PC-9 (cell line): ENCODE measurements at regions of chr6 and their contacts with region 1.

Region 1: DNA sequence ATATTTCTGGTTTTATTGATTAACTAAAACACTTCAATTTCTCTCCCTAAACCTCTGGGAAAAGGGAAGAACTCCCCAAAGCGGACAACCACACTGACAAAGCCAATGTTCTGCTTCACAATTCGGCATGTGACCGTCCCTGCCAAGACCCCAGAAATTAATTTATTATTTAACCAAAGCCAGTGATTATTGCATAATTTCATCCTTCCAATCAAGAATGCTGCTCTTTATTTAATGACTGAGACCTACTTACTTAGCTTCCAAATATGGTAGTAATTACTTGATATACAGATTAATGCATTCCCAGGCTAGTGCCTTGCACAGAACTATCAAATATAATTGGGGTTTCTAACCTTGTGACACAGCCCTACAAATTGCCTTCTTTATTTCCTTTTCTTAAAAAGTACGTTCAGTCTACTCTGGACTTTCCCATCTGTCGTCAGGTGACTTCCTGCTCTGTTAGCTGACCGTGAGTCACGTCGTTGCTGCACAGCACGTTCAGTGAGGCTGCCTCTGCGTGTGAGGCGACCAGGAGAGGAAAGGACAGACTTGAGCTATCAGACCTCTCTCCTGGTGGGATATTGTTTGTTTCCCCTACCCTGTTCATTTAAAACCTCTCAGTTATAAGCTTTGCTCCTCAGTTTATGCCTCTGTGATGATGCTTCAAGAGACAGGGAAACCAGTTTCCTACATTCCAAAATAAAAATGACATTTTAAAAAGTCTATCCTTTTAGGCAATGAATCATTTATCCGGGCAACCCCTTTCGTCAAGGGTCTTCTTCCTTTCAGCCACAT is 55.7 kb upstream of the TNFAIP3 start:
- DNase-seq: peak; percentile 56 to 93
- H3K4me3 ChIP-seq: peak overlapping the region; percentile 15; the same call in 1 of the 2 replicates
- H3K27ac ChIP-seq: peak overlapping the region; percentile 69
- H3K4me1 ChIP-seq: peaks cover 49% of the 10 kb centered on the region
- H3K27me3 ChIP-seq: no peaks in the 10 kb centered on the region
- CTCF ChIP-seq: no peak

Region 2: DNA sequence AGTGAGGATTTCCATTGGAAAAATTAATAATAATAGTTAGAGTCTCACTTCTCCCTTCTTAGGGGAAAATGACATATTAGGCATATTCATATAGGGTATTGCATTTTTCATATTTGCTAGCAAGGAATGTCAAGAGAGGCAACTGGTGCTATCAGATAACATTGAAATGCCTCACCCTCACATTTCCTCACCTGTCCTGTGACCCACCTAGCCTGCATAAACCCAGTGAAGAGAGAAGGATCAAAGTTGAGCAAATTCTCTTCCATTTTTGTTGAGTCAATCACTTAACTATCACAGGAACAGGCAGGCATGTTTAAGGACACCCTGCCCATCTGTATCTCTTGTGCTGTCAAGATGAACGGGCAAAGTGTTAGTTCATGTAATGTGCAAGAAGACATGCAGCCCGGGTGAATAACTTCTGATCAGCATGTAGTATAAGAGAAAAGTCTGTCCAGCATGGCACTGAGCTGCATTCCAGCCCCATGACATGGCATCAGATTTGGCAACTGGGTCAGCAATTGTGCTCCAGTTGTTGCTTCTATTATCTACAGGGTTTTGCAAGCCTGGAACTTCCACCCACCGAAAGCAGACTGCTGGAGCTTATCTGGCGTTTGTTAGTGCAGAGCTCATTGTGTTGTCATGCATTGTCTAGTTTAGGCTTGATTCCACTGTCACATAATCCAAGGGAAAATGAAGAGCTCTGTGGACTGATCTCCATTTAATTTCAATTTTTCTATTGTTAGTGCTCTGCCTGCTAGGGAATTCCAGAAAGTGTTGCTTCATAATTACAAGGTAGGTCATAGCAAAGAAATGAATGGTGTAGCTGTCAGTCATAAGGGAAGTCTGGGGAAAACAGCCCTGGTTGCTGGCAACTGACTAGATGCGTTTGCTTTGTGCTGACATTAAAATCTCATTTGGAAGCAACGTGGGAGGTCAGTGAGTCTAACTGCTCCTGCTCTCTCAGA is 82.7 kb before region 1 on chr6:
- CTCF ChIA-PET with region 1: no interaction called
- POLR2A ChIA-PET with region 1: no interaction called
- intact Hi-C with region 1: loop called (anchors 5 kb)
- DNase-seq: peak; percentile 74 to 93
- H3K4me3 ChIP-seq: peak overlapping the region; percentile 4; the same call in 1 of the 2 replicates
- H3K27ac ChIP-seq: peak overlapping the region; percentile 63
- H3K4me1 ChIP-seq: peaks cover 72% of the 10 kb centered on the region
- H3K27me3 ChIP-seq: no peaks in the 10 kb centered on the region
- CTCF ChIP-seq: no peak

Region 3: DNA sequence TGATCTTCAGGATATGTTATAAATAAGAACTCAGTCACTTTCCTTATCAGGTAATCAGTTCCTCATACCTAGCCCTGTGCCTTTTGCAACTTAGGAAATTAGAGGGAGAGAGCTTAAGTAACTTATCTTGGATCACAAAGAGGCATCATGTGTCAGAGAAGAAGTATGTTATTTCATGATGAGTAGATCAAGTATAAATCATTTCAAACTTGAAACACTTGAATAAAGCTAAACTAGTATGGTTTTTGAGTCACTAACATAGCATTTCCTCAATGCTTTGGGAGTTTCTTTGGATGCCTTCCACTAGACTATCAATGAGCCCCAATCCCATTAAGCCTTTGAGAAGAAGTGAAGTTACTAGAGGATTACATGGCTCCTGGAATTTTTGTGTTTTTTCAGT is 46.9 kb before region 1 on chr6:
- CTCF ChIA-PET with region 1: no interaction called
- POLR2A ChIA-PET with region 1: no interaction called
- intact Hi-C with region 1: loop called (anchors 5 kb)
- DNase-seq: peak in 1 of 2 experiments; percentile 100
- H3K4me3 ChIP-seq: no peak overlapping the region
- H3K27ac ChIP-seq: peak overlapping the region; percentile 92
- H3K4me1 ChIP-seq: peaks cover 46% of the 10 kb centered on the region
- H3K27me3 ChIP-seq: no peaks in the 10 kb centered on the region
- CTCF ChIP-seq: no peak

Region 4: DNA sequence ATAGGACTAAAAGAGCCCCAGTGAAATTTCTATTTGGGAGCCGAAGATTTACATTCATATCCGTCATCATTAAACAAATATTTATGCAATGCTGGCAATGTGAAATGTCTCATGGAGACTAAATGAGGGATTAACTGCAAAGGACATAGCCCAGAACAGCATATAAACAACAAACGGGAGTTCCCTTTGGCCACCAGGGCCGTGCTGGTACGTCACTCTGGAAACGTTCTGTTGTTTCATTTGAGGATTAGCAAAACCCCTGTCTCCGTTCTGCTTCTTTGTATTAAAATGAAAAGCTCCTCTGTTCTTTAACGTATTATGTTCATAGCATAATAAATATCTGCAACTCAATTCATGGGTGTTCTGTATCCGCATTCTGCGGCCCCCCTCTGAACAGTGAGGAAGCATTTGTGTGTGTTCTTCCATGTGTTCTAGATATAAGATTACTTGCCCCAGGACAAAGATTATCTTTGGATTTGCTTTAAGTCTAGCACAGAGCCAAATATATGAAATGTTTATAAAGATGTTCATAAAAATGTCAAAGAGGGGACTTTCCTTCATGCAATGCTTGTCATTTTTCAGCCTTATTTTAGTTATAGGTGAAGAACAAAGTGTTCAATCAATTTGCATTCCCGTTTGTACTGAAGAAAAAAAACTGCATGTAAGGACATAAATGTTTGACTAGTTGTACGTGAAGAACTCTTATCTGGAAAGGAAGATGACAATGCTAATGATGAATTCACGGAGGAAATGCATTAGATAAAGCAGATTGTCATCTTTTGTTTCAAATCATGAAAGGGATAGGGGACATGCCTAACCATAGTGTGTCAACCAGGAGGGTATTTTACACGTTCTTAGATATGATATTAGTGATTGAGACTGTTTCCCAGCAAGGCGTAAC is 34.3 kb before region 1 on chr6:
- CTCF ChIA-PET with region 1: no interaction called
- POLR2A ChIA-PET with region 1: no interaction called
- intact Hi-C with region 1: no loop called
- DNase-seq: no peak
- H3K4me3 ChIP-seq: no peak overlapping the region
- H3K27ac ChIP-seq: no peak overlapping the region
- H3K4me1 ChIP-seq: no peaks in the 10 kb centered on the region
- H3K27me3 ChIP-seq: no peaks in the 10 kb centered on the region
- CTCF ChIP-seq: no peak

Region 5: GRCh38 chr6:137827977-137828810 is 16.9 kb after region 1 on chr6:
- CTCF ChIA-PET with region 1: no interaction called
- POLR2A ChIA-PET with region 1: interaction called, 12 read pairs
- intact Hi-C with region 1: no loop called
- DNase-seq: no peak
- H3K4me3 ChIP-seq: no peak overlapping the region
- H3K27ac ChIP-seq: peak overlapping the region; percentile 79
- H3K4me1 ChIP-seq: peaks cover 50% of the 10 kb centered on the region
- H3K27me3 ChIP-seq: no peaks in the 10 kb centered on the region
- CTCF ChIP-seq: no peak